Breast epithelium (tissue), 4 donors: ENCODE measurements at regions of chr13 and their contacts with region 1.

Region 1: DNA sequence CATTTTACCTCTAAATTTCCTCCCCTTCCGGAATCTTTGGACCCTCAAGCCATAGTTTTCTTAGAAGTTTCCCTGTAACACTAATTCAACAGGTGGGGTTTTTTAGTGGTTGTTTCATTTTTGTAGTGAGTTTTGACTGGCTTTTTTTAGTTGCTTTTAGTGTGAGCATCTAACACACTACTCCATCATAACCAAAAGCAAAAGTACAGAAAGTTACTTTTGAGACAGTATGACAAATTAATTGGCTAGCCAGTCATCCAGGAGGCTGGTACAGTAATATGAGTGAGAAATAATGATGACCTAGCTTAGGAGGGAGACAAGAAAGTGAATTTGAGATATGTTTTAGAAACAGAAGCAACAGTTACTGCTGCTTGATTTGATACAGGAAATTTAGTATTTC is 71.5 kb downstream of the DNAJC15 start:
- DNase-seq: no peak
- H3K4me3 ChIP-seq: no peak overlapping the region
- H3K27ac ChIP-seq: no peak overlapping the region
- H3K4me1 ChIP-seq: no peaks in the 10 kb centered on the region
- H3K27me3 ChIP-seq: no peaks in the 10 kb centered on the region
- CTCF ChIP-seq: no peak
- POLR2A ChIP-seq: no peak

Region 2: GRCh38 chr13:41177616-41178015 is 1917.3 kb before region 1 on chr13:
- intact Hi-C with region 1: no loop called
- DNase-seq: no peak
- H3K4me3 ChIP-seq: no peak overlapping the region
- H3K27ac ChIP-seq: peak overlapping the region; percentile 15 to 52
- H3K4me1 ChIP-seq: no peaks in the 10 kb centered on the region
- H3K27me3 ChIP-seq: no peaks in the 10 kb centered on the region
- CTCF ChIP-seq: no peak
- POLR2A ChIP-seq: no peak

Region 3: DNA sequence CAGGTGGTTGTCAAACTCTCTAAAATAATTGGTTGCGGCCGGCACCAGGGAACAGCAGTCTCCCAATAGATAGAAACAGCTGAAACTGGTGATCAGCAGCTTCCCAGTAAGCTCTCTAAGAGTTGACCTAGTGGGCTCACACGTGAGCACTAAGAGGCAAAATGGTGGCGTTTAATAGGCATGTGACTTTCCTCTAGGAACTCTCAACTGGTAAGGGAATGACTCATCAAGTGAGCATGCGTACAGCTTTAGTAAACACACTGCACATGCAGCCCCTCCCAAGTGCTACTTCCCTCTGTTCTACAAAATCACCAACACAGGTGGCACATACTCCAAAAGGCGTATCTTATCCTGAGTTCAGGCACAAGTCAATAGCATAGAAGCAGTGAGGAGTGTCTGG is 479.2 kb before region 1 on chr13:
- intact Hi-C with region 1: no loop called
- DNase-seq: no peak
- H3K4me3 ChIP-seq: no peak overlapping the region
- H3K27ac ChIP-seq: no peak overlapping the region
- H3K4me1 ChIP-seq: no peaks in the 10 kb centered on the region
- H3K27me3 ChIP-seq: no peaks in the 10 kb centered on the region
- CTCF ChIP-seq: no peak
- POLR2A ChIP-seq: no peak

Region 4: DNA sequence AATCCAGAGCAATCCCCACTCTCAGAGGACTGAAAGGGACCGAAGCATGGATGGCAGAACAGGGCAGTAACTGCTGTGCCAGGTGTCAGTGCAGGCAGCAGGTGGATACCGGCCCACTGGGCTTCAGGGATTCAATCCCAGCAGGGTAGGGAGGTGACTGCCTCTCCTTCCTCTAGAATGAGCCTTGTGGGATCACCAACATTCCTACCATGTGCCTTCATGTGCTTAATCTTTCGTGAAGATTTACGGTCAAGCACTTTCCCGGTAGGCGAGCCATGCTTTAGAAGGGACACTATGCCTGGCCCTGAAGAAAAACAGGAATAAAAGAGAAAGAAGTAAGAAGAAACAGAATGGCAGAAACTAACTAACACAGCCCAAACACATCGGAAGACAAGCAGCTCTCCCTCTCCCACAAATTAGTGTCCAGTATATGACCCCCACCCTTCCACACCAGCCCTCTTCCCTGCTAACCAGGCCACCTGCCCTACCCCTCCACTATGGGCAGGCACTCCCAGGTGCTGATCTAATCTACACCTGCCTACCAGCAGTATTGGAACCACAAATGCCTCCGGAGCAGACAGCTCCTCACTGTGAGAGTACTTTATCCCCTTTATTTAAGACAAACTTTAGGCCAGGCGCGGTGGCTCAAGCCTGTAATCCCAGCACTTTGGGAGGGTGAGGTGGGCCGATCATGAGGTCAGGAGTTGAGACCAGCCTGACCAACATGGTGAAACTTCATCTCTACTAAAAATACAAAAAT is 1731.9 kb after region 1 on chr13:
- intact Hi-C with region 1: loop called (anchors 5 kb)
- DNase-seq: no peak
- H3K4me3 ChIP-seq: no peak overlapping the region
- H3K27ac ChIP-seq: no peak overlapping the region
- H3K4me1 ChIP-seq: no peaks in the 10 kb centered on the region
- H3K27me3 ChIP-seq: no peaks in the 10 kb centered on the region
- CTCF ChIP-seq: no peak
- POLR2A ChIP-seq: no peak